Left ventricle myocardium inferior (tissue), 1 donor: ENCODE measurements at regions of chr4 and their contacts with region 1.

Region 1: GRCh38 chr4:70768301-70768948 is 46.7 kb downstream of the RUFY3 start:
- DNase-seq: no peak
- H3K4me3 ChIP-seq: no peak overlapping the region
- H3K27ac ChIP-seq: no peak overlapping the region
- H3K4me1 ChIP-seq: peaks cover 4% of the 10 kb centered on the region
- H3K27me3 ChIP-seq: no peaks in the 10 kb centered on the region
- CTCF ChIP-seq: no peak

Region 2: GRCh38 chr4:70818173-70818855 is 49.9 kb after region 1 on chr4:
- intact Hi-C with region 1: loop called (anchors 10 kb)
- DNase-seq: no peak
- H3K4me3 ChIP-seq: no peak overlapping the region
- H3K27ac ChIP-seq: no peak overlapping the region
- H3K4me1 ChIP-seq: no peaks in the 10 kb centered on the region
- H3K27me3 ChIP-seq: no peaks in the 10 kb centered on the region
- CTCF ChIP-seq: no peak

Region 3: GRCh38 chr4:71195924-71196323 is 427.5 kb after region 1 on chr4:
- intact Hi-C with region 1: no loop called
- DNase-seq: no peak
- H3K4me3 ChIP-seq: no peak overlapping the region
- H3K27ac ChIP-seq: no peak overlapping the region
- H3K4me1 ChIP-seq: no peaks in the 10 kb centered on the region
- H3K27me3 ChIP-seq: peaks cover 6% of the 10 kb centered on the region
- CTCF ChIP-seq: no peak